ENCODE measurements at regions of chr7 and their contacts with region 1.

Region 1: DNA sequence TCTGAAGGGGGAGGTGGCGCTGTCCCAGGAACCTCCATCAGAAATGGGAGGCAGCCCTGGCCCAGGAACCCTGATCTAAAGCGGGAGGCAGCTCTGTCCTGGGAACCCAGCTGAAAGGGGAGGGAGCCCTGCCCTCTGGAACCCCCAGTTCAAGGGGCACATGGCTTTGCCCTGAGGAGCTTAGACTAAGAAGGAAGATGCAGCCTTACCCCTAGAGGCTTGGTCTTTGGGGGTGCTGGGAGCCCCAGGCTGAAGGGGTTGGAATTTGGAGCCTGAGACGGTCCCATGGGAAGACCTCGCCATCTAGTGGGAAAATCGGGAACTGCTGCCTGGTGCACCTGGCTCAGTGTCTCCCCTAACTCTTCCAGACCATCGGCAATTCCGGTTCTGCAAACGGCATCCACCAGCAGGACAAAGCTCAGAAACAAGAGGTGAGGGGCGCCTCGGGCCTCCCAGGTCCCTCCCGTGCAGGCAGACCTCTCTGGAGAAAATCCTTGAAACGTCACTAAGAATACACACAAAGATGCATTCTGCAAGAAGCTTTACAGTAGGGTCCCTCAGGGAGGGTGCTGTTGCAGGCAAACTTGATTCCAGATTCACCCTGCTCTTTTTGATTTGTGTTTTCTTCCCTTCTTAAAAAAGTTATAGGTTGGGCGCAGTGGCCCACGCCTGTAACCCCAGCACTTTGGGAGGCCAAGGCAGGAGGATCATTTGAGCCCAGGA is 52.4 kb upstream of the GTF2IRD1 start:
- H3K4me3 ChIP-seq: no peak overlapping the region
- H3K27ac ChIP-seq: no peak overlapping the region
- H3K4me1 ChIP-seq: no peaks in the 10 kb centered on the region
- CTCF ChIP-seq: peak; percentile 72

Region 2: GRCh38 chr7:74199551-74200242 is 201.6 kb before region 1 on chr7:
- CTCF ChIA-PET with region 1: interaction called, 126 read pairs
- POLR2A ChIA-PET with region 1: no interaction called
- H3K4me3 ChIP-seq: no peak overlapping the region
- H3K27ac ChIP-seq: no peak overlapping the region
- H3K4me1 ChIP-seq: no peaks in the 10 kb centered on the region; the same call in 1 of the 2 replicates
- CTCF ChIP-seq: no peak

Region 3: DNA sequence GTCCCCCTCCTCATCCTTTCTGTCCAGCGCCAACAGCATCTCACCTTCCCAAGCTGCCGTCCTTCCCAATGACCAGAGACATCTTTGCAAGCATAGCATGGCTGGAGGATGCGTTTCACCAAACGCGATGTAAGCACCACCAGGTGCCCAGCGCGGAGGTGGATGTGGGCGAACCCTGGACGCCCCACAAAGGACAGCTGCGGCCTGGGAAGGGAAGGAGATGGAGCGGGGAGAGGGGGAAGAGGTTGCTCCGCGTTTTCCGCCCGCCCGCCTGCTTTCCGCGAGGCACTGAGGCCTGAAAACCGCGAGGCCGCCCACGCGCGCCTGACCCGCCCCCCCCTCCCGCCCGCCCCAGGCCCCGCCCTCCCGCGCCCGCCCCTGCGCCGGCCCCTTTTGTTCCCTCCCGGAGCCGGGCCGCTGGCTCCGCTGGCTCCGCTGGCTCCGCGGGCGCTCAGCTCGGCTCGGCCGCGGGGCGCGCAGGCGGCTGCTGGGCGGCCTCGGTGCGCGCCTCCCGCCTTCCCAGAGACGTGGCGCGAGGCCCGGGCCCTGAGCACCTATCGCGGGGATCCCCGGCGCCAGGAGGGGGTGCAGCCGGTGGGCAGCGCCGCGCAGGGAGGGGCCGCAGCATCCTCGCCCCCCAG is 112.2 kb before region 1 on chr7 and contains the start of gene CLIP2:
- CTCF ChIA-PET with region 1: interaction called, 10 read pairs
- POLR2A ChIA-PET with region 1: no interaction called
- H3K4me3 ChIP-seq: peak within 1 kb of the TSS; percentile 56
- H3K27ac ChIP-seq: peak within 1 kb of the TSS; percentile 57; the same call in 1 of the 2 replicates
- H3K4me1 ChIP-seq: peaks cover 5% of the 10 kb centered on the region; the same call in 1 of the 2 replicates
- CTCF ChIP-seq: no peak

Region 4: GRCh38 chr7:74412056-74412455 is 10.8 kb after region 1 on chr7:
- CTCF ChIA-PET with region 1: interaction called, 40 read pairs
- POLR2A ChIA-PET with region 1: no interaction called
- H3K4me3 ChIP-seq: no peak overlapping the region
- H3K27ac ChIP-seq: no peak overlapping the region
- H3K4me1 ChIP-seq: no peaks in the 10 kb centered on the region
- CTCF ChIP-seq: no peak

Region 5: DNA sequence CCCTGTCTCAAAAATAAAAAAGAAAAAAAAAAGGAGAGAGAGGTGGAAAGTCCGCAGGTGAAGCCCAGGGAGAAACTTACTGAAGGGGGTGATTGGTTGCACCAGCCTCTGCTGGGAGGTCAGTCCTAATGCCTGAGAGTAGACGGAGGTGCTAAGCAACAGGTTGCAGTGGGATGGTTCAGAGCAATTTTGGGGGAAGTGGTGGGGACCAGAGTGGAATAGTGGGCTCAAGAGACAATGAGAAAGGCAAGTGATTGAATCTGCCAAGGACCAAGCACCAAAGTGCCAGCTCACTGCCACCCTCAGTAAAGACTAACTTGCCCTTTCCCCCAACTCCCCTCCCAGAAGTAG is 166.0 kb after region 1 on chr7:
- CTCF ChIA-PET with region 1: interaction called, 16 read pairs
- POLR2A ChIA-PET with region 1: no interaction called
- H3K4me3 ChIP-seq: no peak overlapping the region
- H3K27ac ChIP-seq: no peak overlapping the region
- H3K4me1 ChIP-seq: no peaks in the 10 kb centered on the region
- CTCF ChIP-seq: no peak